ENCODE measurements at regions of chr6 and their contacts with region 1.

Region 1: DNA sequence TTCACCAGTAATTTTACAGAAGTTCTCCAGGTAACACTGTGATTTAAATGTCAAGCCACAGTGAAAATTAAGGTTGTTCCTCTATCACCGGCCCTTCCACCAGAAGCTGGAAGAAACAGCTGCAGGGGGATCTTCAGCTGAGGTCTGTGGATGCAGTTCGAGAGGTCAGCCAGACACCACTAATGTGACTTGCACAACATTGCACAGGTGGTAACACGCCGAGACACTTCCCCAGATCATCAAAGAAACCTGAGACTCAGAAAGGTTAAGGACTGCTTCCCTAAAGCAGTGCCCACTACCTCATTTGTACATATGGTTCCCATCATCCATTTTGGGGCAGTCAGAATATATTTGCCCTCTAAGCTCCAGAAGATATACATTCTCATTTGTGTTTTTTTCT is 8.1 kb upstream of the SERPINB9 start:
- DNase-seq: no peak
- H3K4me3 ChIP-seq: no peak overlapping the region
- H3K27ac ChIP-seq: no peak overlapping the region
- H3K4me1 ChIP-seq: no peaks in the 10 kb centered on the region
- H3K27me3 ChIP-seq: no peaks in the 10 kb centered on the region
- CTCF ChIP-seq: no peak
- EP300 ChIP-seq: no peak
- POLR2A ChIP-seq: no peak

Region 2: GRCh38 chr6:2314641-2315040 is 596.5 kb before region 1 on chr6:
- intact Hi-C with region 1: no loop called
- DNase-seq: no peak
- H3K4me3 ChIP-seq: no peak overlapping the region
- H3K27ac ChIP-seq: no peak overlapping the region
- H3K4me1 ChIP-seq: no peaks in the 10 kb centered on the region
- H3K27me3 ChIP-seq: no peaks in the 10 kb centered on the region
- CTCF ChIP-seq: no peak
- EP300 ChIP-seq: no peak
- POLR2A ChIP-seq: no peak

Region 3: DNA sequence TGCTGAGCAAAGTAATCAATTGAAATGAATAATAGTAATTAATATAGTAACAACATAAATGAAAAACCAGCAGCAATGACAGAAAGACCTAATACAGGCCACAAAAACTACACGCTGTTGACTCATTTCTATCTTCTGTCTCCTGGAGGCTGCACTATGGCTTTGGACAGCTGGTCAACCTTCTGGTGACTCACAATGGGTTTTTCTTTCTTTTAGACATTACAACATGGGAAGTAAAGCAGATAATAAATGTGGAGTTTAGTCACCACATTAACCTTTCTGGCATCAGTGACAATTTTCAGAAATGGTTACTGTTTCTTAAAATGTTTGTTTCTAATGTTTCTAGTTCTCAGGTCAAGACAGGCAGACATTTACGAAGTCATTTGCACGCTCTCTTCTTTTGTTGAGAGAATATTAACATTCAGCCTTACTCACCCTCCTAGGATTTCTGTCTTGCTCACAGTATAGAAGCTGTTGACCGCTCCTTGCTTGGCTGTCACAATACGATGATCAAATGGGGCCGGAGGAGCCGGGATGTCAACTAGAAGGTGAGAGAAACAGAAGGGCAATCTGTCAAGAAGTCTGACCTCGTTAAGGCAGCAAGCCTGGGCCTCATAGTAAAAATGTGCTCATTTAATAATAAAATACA is 222.6 kb before region 1 on chr6:
- intact Hi-C with region 1: no loop called
- DNase-seq: no peak
- H3K4me3 ChIP-seq: no peak overlapping the region
- H3K27ac ChIP-seq: no peak overlapping the region
- H3K4me1 ChIP-seq: no peaks in the 10 kb centered on the region
- H3K27me3 ChIP-seq: no peaks in the 10 kb centered on the region
- CTCF ChIP-seq: no peak
- EP300 ChIP-seq: no peak
- POLR2A ChIP-seq: no peak

Region 4: DNA sequence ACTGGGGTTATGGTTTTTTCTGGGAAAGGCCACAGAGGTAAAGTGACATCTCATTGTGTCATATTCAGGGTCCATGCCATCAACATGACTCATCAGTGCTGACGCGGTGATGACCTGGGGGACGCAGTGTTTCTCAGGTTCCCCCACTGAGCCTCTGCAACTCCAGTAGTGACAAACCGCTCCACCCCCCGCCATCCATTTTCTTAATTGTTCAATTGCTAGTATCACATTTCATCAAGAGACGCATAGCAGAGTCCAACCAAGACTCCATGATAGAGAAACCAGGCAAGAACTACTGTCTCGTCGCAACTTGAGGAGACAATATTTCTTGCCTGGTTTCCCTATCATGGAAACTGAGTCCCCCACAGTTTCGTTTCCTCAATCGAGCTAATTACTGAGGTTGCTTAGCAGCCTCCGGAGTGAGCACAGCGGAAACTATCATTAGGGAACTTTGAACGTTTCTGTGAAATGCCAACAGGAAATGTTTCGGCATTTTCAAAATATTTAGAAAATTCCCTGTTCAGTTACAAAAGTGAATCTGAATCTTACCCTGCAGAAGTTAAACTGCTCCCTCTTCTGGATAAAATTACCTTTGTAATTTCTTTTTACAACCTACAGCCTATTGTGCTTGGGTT is 57.3 kb before region 1 on chr6:
- intact Hi-C with region 1: loop called in 1 of 4 experiments (anchors 10 kb)
- DNase-seq: peak in 1 of 5 donors; percentile 61
- H3K4me3 ChIP-seq: peak overlapping the region; percentile 28
- H3K27ac ChIP-seq: peak overlapping the region; percentile 18 to 64
- H3K4me1 ChIP-seq: peaks cover 10% of the 10 kb centered on the region
- H3K27me3 ChIP-seq: no peaks in the 10 kb centered on the region
- CTCF ChIP-seq: peak in 1 of 3 donors; percentile 30
- EP300 ChIP-seq: no peak
- POLR2A ChIP-seq: no peak

Measured in ovary (tissue), 10 donors.